HEK293 (cell line): ENCODE measurements at regions of chr17 and their contacts with region 1.

Region 1: DNA sequence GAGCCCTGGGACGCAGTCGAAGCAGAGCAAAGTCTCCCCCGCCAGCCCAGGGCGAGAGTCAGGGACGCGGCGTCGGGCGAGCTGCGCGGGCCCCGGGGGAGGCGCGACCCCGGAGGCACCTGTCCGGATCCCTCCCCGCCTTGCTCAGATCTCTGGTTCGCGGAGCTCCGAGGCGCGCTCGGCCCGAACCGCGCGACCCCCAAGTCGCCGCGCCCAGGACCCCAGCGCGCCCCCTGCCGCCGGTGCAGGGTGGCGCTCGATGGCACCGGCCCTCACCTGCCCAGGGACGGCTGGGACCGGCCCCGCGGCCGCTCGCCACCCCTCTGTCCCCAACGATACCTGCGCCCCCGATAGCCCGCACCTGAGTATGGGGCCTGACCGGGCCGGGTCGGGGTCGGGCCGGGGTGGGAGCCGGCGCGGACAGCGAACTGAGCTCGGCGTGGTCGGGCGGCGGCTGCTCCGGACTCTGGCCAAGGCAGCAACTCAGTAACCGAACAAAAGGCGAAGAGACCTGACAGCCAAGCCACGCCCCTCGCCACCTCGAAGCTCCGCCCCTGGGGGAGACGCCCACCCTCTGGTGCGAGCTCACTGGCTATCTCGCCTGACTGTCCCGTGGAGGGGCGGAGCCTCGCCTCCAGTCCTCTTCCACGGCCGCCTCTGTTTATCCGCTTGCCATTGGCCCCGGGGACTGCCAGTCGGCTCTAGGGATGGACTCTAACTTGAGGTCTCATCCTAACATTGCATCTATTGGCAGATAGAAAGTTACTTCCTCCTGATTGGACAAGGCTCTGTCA is at the start of gene JUP:
- H3K4me3 ChIP-seq: peak within 1 kb of the TSS; percentile 61
- H3K27ac ChIP-seq: peak within 1 kb of the TSS; percentile 53; the same call in 1 of the 2 replicates
- H3K4me1 ChIP-seq: peaks cover 12% of the 10 kb centered on the region
- CTCF ChIP-seq: peak; percentile 40

Region 2: GRCh38 chr17:41750862-41751261 is 35.6 kb before region 1 on chr17:
- CTCF ChIA-PET with region 1: interaction called, 15 read pairs
- POLR2A ChIA-PET with region 1: interaction called, 21 read pairs
- H3K4me3 ChIP-seq: no peak overlapping the region
- H3K27ac ChIP-seq: no peak overlapping the region
- H3K4me1 ChIP-seq: no peaks in the 10 kb centered on the region
- CTCF ChIP-seq: no peak

Region 3: DNA sequence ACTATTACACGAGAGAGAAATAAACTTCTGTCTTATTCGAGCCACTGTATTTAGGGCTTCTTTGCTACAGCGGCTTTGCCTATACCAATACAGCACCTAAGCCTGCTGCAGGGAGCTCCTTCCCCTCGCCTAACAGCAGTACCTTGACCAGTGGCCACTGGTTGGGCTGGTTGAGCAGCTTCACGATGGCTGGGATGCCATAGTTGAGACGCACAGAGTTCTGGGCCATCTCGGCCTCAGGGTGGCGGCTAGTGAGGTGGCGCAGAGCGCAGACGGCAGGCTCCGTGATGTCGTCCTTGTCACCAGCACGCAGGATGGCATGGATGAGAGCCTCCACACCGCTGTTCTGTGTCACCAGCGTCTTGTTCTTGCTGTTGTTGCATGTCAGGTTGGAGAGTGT is 23.6 kb before region 1 on chr17:
- CTCF ChIA-PET with region 1: interaction called, 9 read pairs
- POLR2A ChIA-PET with region 1: interaction called, 13 read pairs
- H3K4me3 ChIP-seq: no peak overlapping the region
- H3K27ac ChIP-seq: no peak overlapping the region
- H3K4me1 ChIP-seq: no peaks in the 10 kb centered on the region
- CTCF ChIP-seq: no peak

Region 4: GRCh38 chr17:41870627-41871026 is 84.2 kb after region 1 on chr17:
- CTCF ChIA-PET with region 1: no interaction called
- POLR2A ChIA-PET with region 1: no interaction called
- H3K4me3 ChIP-seq: no peak overlapping the region
- H3K27ac ChIP-seq: no peak overlapping the region
- H3K4me1 ChIP-seq: no peaks in the 10 kb centered on the region
- CTCF ChIP-seq: no peak